ENCODE measurements at regions of chr2 and their contacts with region 1.

Region 1: DNA sequence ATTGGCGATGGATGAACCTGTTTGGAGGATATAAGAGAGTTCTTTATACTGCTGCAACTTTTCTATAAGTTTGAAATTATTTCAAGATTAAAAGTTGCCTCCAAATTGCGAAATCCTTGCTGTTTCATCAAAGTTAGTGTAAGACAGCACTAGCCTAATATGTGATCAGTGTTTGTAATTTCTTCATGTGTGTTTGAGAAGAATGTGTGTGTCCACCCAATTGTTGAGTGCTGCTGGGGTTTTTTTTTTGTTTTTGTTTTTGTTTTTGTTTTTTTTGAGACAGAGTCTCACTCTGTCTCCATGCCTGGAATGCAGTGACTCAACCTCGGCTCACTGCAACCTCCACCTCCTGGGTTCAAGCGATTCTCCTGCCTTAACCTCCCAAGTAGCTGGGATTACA is 33.4 kb downstream of the CDK15 start:
- DNase-seq: no peak

Region 2: GRCh38 chr2:202545523-202545922 is 705.8 kb after region 1 on chr2:
- intact Hi-C with region 1: loop called in 1 of 2 experiments (anchors 5 kb)
- DNase-seq: no peak

Region 3: DNA sequence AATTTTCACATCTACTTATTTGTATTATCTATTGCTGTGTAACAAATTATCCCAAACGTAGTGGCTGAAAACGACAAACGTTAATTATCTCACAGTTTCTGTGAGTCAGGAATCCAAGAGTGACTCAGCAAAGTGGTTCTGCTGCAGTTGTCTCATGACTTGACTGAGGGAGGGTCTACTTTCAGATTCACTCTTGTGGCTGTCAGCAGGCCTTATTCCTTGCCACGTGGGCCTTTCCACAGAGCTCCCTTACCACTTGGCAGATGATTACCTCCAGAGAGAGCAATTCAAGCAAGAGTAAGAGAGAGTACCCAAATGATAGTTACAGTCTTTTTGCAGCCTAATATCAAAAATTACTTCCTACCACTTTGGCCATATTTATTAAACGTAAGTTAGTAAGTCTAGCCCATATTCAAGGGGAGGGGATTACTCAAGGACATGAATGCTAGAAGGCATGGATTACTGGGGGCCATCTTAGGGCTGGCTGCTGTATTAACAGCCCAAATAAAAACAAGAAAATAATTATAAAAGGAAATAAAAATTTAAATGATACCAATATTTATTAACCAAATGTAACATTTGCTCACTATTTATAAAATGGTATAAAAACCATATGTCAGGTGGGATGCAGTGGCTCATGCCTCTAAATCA is 1126.2 kb after region 1 on chr2:
- intact Hi-C with region 1: no loop called
- DNase-seq: no peak